Activated CD4-positive, alpha-beta memory T cell treated with anti-CD3 and anti-CD28 coated beads for 36 hours (primary cell): ENCODE measurements at regions of chr2 and their contacts with region 1.

Region 1: DNA sequence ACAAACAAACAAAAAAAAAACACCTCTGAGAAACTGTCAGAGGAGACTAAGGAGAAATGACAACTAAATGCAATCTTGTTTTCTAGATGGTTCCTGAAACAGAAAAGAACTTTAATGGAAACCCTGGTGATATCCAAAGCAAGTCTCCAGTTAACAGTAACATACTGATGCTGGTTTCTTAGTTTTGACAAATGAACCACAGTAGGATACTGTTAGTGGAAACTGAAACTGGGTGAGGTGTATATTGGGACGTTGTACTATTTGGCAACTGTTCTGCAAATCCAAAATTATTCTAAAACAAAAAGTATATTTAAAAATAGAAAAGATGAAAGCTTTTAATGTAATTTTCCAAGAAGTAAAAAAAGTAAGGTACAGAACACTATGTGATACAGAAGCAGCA is 11.4 kb downstream of the SESTD1 start:
- DNase-seq: no peak
- H3K4me3 Mint-ChIP-seq: no peak overlapping the region
- H3K27ac Mint-ChIP-seq: peak overlapping the region; percentile 28
- H3K4me1 Mint-ChIP-seq: peaks cover 52% of the 10 kb centered on the region
- H3K27me3 Mint-ChIP-seq: no peaks in the 10 kb centered on the region

Region 2: DNA sequence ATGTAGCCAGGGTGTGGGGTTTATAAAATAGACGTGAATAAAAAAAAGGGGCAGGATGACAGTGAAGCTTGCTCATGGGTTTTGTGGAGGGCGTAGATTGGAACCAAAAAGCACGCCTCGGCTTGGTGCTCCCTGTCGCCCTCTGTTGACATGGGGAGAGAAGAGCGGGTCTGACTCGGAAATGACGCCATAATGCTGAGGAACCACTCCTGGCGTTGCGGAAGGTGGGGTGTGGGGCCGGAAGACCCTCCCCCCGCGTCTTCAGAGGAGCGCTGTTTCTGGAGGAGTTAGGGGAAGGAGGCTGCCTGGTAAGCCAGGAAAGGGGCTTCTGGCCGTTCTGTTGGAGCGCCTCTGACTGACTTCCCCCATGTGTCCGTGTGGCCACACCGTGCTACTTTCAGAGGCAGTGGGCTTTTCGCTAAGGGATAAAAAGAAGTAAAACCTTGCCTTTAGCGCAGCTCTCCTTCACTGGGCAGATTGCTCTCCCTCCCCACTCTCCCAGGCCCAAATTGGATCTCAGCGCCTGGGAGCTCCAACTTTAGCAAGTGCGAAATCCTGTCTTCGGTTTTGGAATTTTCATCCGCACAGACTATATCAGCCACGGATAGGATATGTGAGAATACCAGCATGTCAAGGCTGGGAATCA is 730.2 kb before region 1 on chr2:
- CTCF ChIA-PET with region 1: no interaction called
- POLR2A ChIA-PET with region 1: no interaction called
- intact Hi-C with region 1: loop called (anchors 5 kb)
- DNase-seq: peak; percentile 92
- H3K4me3 Mint-ChIP-seq: peak overlapping the region; percentile 95
- H3K27ac Mint-ChIP-seq: peak overlapping the region; percentile 91
- H3K4me1 Mint-ChIP-seq: peaks cover 54% of the 10 kb centered on the region
- H3K27me3 Mint-ChIP-seq: no peaks in the 10 kb centered on the region

Region 3: DNA sequence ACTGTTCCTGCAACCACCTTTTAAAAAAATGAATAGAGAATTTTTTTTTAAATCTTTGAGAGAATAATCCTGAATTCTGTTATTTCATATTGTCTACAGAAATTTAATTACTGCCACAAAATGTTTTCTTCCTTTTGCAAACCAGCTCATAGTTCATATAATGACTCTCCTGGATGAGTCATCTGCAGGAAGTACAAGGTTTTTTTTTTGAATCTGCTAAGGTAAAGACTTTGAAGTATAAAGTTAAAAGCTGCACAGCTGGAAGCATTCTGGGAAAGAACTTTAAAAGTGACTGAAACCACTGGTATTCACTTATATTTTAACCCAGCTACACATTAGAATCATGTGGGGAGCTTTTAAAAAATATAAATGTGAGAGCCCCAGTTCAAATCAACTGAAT is 14.0 kb before region 1 on chr2:
- CTCF ChIA-PET with region 1: interaction called, 3 read pairs
- POLR2A ChIA-PET with region 1: no interaction called
- intact Hi-C with region 1: loop called (anchors 2 kb)
- DNase-seq: no peak
- H3K4me3 Mint-ChIP-seq: no peak overlapping the region
- H3K27ac Mint-ChIP-seq: no peak overlapping the region
- H3K4me1 Mint-ChIP-seq: peaks cover 32% of the 10 kb centered on the region
- H3K27me3 Mint-ChIP-seq: no peaks in the 10 kb centered on the region

Region 4: DNA sequence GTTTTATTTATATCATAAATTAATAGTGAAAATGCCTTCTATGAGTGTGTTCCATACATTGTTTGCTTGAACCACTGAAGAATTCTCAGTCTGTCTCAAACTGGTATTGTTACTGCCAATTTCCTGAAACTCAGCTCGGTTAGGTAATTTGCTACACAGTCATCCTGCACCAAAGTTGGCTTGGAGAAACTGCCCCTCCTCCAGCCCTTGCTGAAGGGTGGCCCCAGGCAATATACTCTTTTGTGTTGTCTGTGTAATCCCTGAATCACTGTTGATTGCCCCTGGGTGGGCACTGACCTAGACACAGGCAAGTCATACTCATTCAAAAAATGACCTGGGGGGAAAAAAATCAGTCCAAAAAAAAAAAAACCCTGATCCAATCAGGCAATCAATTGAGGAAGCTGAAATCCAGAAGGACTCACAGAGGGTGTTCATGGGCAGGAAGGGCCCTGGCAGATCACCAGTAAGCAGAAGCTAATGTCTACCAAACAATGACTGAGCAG is 15.1 kb after region 1 on chr2:
- CTCF ChIA-PET with region 1: interaction called, 4 read pairs
- POLR2A ChIA-PET with region 1: no interaction called
- intact Hi-C with region 1: loop called (anchors 1 kb)
- DNase-seq: peak; percentile 60
- H3K4me3 Mint-ChIP-seq: no peak overlapping the region
- H3K27ac Mint-ChIP-seq: no peak overlapping the region
- H3K4me1 Mint-ChIP-seq: peaks cover 16% of the 10 kb centered on the region
- H3K27me3 Mint-ChIP-seq: peaks cover 28% of the 10 kb centered on the region